HepG2 (cell line): ENCODE measurements at regions of chr2 and their contacts with region 1.

Region 1: DNA sequence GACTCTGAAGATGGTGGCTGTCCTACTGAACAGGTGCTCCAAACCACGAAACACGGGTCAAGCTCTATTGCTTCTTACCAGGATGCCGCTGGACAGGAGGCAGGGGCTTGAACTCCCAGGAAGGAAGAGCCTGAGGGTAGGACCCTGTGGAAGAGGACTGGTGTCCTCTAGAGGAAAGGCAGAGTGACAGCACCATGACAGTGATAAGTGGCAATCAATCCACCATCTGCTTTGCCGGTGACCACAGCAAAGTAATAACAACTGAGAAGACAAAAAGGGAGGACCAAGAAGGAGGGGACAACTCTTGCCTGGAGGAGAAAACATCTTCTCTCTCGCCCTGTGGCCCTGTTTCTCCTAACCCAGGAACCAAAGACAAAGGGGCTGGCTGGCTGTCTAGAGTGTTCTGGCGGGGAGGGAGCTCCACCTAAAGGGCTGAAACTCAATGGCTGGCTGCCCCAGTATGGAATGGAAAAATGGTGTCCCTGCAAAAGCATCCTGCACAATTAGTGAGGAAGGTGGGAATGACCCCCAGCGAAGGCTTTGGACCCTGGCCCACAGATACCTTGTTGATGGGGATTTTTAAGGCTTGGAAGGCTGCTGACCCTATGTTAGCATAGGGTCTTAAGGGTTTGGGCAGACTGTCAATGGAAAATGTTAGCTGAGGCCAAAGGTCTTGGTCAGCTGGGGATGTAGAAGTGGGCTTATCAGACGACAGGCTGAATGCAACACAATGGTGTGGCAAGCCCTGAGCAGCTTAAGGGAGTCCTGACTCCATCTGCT is 35.4 kb downstream of the PROC start:
- DNase-seq: peak; percentile 85
- ATAC-seq: peak; percentile 88
- H3K4me3 ChIP-seq: peak overlapping the region in 2 of 3 experiments; percentile 27 to 38; a peak in 4 of 6 replicates
- H3K27ac ChIP-seq: peak overlapping the region; percentile 93
- H3K4me1 ChIP-seq: peaks cover 83% of the 10 kb centered on the region
- H3K27me3 ChIP-seq: no peaks in the 10 kb centered on the region
- CTCF ChIP-seq: peak; percentile 94
- EP300 ChIP-seq: peak in 1 of 2 experiments; percentile 51; a peak in 2 of 4 replicates
- POLR2A ChIP-seq: peak; percentile 18 to 43; a peak in 1 of 4 replicates
- RAD21 ChIP-seq: peak; percentile 98

Region 2: GRCh38 chr2:127157651-127158470 is 295.7 kb before region 1 on chr2:
- CTCF ChIA-PET with region 1: no interaction called
- POLR2A ChIA-PET with region 1: no interaction called
- in situ Hi-C with region 1: no loop called
- intact Hi-C with region 1: no loop called
- DNase-seq: peak; percentile 20
- ATAC-seq: peak; percentile 92
- H3K4me3 ChIP-seq: no peak overlapping the region
- H3K27ac ChIP-seq: no peak overlapping the region
- H3K4me1 ChIP-seq: no peaks in the 10 kb centered on the region
- H3K27me3 ChIP-seq: peaks cover 0 to 26% of the 10 kb centered on the region in 2 experiments; a peak in 2 of 5 replicates
- CTCF ChIP-seq: peak; percentile 47
- EP300 ChIP-seq: no peak
- POLR2A ChIP-seq: no peak
- RAD21 ChIP-seq: peak; percentile 25; the same call in 1 of the 2 replicates

Region 3: DNA sequence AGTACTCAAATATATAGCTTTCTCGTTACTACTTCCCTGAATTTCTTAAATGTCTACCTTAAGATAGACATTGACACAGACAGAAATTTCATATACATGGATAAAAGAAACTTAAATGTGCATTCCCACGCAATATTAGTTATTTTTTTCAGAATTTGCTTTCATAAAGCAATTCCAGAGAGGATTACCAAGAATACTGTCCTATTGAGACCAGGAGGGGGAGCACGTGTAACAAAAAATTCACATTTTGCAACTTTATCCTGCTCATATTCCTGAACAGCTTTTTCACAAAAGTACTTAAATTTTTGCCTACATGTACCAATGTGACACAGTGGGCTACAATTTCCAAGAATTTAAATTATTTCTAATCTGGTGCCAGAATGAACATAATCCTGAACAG is 128.9 kb before region 1 on chr2:
- CTCF ChIA-PET with region 1: interaction called, 33 read pairs
- POLR2A ChIA-PET with region 1: interaction called, 3 read pairs
- in situ Hi-C with region 1: loop called (anchors 5 kb)
- intact Hi-C with region 1: loop called (anchors 1 kb)
- DNase-seq: peak; percentile 59
- ATAC-seq: peak; percentile 79
- H3K4me3 ChIP-seq: no peak overlapping the region
- H3K27ac ChIP-seq: no peak overlapping the region
- H3K4me1 ChIP-seq: peaks cover 5% of the 10 kb centered on the region
- H3K27me3 ChIP-seq: no peaks in the 10 kb centered on the region
- CTCF ChIP-seq: peak; percentile 67
- EP300 ChIP-seq: no peak
- POLR2A ChIP-seq: no peak
- RAD21 ChIP-seq: peak; percentile 50; the same call in 1 of the 2 replicates

Region 4: GRCh38 chr2:127387655-127388422 is 65.7 kb before region 1 on chr2 and contains the start of gene MAP3K2:
- CTCF ChIA-PET with region 1: no interaction called
- POLR2A ChIA-PET with region 1: interaction called, 33 read pairs
- in situ Hi-C with region 1: no loop called
- intact Hi-C with region 1: loop called (anchors 1 kb)
- DNase-seq: peak; percentile 86
- ATAC-seq: peak; percentile 83
- H3K4me3 ChIP-seq: peak within 1 kb of the TSS; percentile 87 to 95 (median 94)
- H3K27ac ChIP-seq: peak within 1 kb of the TSS; percentile 99
- H3K4me1 ChIP-seq: peaks cover 52% of the 10 kb centered on the region
- H3K27me3 ChIP-seq: no peaks in the 10 kb centered on the region; a peak in 1 of 5 replicates
- CTCF ChIP-seq: 0 out of 2 replicates have a peak, but pooled peaks have one; percentile 1
- EP300 ChIP-seq: no peak; a peak in 2 of 4 replicates
- POLR2A ChIP-seq: peak; percentile 91 to 93
- RAD21 ChIP-seq: peak; percentile 85
- total RNA-seq, gene MAP3K2: 37.2 and 56.1 TPM in 2 replicates

Region 5: DNA sequence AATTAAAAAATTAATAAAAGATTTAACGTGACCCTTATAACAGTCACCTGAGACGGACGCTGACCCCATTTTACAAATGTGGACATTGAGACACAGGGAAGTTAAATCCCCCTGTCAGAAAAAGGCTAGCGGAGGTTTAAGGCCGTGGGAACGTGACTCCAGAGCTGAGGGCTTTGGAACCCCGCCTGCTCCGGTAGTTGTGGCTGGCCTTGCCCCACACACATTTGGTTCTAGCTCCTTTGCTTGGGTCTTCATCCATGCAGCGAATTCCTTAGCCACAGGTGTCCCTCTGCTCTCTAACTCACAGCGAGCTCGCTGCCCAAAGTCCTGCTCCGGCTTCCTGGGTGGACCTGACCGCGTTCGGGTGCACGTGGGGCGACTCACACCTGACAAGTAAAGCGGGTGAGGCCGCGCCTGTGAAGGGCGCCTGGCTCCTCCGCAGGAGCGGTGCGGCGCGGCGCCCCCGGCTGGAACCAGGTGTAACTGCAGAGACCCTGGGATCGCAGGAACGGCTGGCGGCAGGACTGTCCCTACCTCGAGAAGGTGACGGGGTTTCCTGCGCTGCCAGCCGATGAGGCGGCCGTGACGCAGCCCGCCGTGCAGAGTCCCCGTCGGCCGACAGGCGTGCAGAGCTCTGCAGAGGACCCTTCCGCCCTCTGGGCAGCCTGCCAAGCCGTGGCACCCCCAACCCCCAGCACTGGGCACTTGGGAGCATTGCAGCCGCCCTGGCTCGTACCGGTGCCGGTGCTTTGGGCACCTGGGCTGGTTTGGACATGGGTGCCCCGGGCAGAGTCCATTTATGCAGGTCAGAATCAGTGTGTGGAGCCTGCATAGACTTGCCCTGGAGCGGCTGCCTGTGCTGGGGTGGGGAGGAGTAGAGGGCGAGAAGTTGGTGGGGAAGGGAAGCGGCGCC is 37.7 kb before region 1 on chr2:
- CTCF ChIA-PET with region 1: interaction called, 3 read pairs
- POLR2A ChIA-PET with region 1: interaction called, 67 read pairs
- in situ Hi-C with region 1: no loop called
- intact Hi-C with region 1: loop called (anchors 1 kb)
- DNase-seq: no peak
- ATAC-seq: no peak
- H3K4me3 ChIP-seq: no peak overlapping the region
- H3K27ac ChIP-seq: peak overlapping the region; percentile 96
- H3K4me1 ChIP-seq: peaks cover 100% of the 10 kb centered on the region
- H3K27me3 ChIP-seq: no peaks in the 10 kb centered on the region
- CTCF ChIP-seq: peak; percentile 65
- EP300 ChIP-seq: no peak
- POLR2A ChIP-seq: no peak
- RAD21 ChIP-seq: peak; percentile 62; the same call in 1 of the 2 replicates

Region 6: DNA sequence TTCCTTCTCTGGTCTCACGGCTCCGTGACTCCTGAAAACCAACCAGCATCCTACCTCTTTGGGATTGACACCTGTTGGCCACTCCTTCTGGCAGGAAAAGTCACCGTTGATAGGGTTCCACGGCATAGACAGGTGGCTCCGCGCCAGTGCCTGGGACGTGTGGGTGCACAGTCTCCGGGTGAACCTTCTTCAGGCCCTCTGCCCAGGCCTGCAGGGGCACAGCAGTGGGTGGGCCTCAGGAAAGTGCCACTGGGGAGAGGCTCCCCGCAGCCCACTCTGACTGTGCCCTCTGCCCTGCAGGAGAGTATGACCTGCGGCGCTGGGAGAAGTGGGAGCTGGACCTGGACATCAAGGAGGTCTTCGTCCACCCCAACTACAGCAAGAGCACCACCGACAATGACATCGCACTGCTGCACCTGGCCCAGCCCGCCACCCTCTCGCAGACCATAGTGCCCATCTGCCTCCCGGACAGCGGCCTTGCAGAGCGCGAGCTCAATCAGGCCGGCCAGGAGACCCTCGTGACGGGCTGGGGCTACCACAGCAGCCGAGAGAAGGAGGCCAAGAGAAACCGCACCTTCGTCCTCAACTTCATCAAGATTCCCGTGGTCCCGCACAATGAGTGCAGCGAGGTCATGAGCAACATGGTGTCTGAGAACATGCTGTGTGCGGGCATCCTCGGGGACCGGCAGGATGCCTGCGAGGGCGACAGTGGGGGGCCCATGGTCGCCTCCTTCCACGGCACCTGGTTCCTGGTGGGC is 25.3 kb before region 1 on chr2:
- CTCF ChIA-PET with region 1: no interaction called
- POLR2A ChIA-PET with region 1: interaction called, 31 read pairs
- in situ Hi-C with region 1: no loop called
- intact Hi-C with region 1: no loop called
- DNase-seq: no peak
- ATAC-seq: peak; percentile 11
- H3K4me3 ChIP-seq: no peak overlapping the region
- H3K27ac ChIP-seq: no peak overlapping the region
- H3K4me1 ChIP-seq: peaks cover 15% of the 10 kb centered on the region
- H3K27me3 ChIP-seq: no peaks in the 10 kb centered on the region
- CTCF ChIP-seq: no peak
- EP300 ChIP-seq: no peak
- POLR2A ChIP-seq: peak in 1 of 2 experiments; percentile 26; a peak in 2 of 4 replicates
- RAD21 ChIP-seq: no peak

Region 7: GRCh38 chr2:127471286-127471988 is 17.9 kb after region 1 on chr2:
- CTCF ChIA-PET with region 1: no interaction called
- POLR2A ChIA-PET with region 1: interaction called, 13 read pairs
- in situ Hi-C with region 1: no loop called
- intact Hi-C with region 1: no loop called
- DNase-seq: no peak
- ATAC-seq: peak; percentile 27
- H3K4me3 ChIP-seq: no peak overlapping the region
- H3K27ac ChIP-seq: no peak overlapping the region
- H3K4me1 ChIP-seq: peaks cover 25% of the 10 kb centered on the region
- H3K27me3 ChIP-seq: no peaks in the 10 kb centered on the region
- CTCF ChIP-seq: no peak
- EP300 ChIP-seq: no peak
- POLR2A ChIP-seq: no peak
- RAD21 ChIP-seq: no peak

Region 8: GRCh38 chr2:127526149-127527000 is 72.8 kb after region 1 on chr2 and contains the start of gene IWS1:
- CTCF ChIA-PET with region 1: no interaction called
- POLR2A ChIA-PET with region 1: interaction called, 12 read pairs
- in situ Hi-C with region 1: no loop called
- intact Hi-C with region 1: no loop called
- DNase-seq: peak; percentile 97
- ATAC-seq: peak; percentile 89
- H3K4me3 ChIP-seq: peak within 1 kb of the TSS; percentile 91 to 93 (median 92)
- H3K27ac ChIP-seq: peak within 1 kb of the TSS; percentile 91
- H3K4me1 ChIP-seq: peaks cover 41% of the 10 kb centered on the region
- H3K27me3 ChIP-seq: no peaks in the 10 kb centered on the region; a peak in 1 of 5 replicates
- CTCF ChIP-seq: peak; percentile 63
- EP300 ChIP-seq: 0 out of 4 replicates have a peak, but pooled peaks of 1 of the 2 experiments have one; percentile 8
- POLR2A ChIP-seq: peak; percentile 70 to 95
- RAD21 ChIP-seq: peak; percentile 28
- total RNA-seq, gene IWS1: 62.3 and 90.2 TPM in 2 replicates